Activated T-helper 2 cell treated with anti-CD3 and anti-CD28 coated beads, Interferon-gamma antibody, Interleukin-2, Interleukin-4, amounts not matched to agents 10 μg/mL and 5 μg/mL and 100 μg/mL, durations not matched to agents 14 hours and 24 hours and 36 hours (primary cell): ENCODE measurements at regions of chr2 and their contacts with region 1.

Region 1: DNA sequence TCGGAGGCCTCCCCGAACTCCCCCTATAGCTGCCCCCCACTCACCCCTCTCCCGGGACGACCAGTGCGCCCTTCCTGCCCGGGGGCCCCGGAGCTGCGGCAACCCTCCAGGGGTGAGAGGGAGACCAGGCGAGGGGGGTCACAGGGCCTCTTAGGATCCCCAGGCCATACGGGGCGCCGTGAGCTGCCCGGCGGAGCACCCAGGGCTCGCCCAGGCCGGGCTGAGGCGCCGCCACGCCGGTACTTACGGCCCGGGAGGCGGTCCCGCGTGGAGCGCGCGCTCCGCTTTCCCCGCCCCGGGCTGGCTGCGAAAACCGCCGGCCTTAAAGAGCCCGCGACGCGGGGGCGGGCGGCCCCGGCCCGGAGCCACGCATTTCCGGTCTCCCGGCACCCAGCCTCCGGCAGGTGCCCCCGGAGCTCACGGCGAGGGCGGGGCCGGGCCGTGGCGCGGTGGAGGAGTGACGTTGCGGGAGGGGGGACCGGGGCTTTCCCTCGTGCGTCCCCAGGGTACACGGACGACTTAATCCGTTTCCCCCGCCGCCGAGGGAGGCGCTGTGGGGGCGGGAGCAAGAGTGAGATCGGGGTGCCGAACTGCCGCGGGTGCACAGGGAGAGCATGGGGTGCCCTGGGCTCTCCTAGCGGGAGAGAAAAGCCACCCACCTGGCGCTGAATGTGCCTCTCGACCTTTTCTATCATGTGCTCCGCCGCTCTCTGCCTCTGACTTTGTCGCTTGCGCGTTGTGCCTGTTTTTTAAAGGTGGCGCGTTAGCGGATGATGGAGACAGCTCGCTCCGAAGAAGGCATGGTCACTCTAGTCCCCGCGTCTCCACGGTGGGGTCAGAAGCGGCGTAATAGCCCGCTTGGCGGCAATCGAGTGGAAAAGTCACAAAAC is at the start of gene METTL21A:
- DNase-seq: peak; percentile 93
- H3K4me3 Mint-ChIP-seq: peak within 1 kb of the TSS; percentile 92
- H3K27ac Mint-ChIP-seq: peak within 1 kb of the TSS; percentile 98
- H3K4me1 Mint-ChIP-seq: peaks cover 37% of the 10 kb centered on the region
- H3K27me3 Mint-ChIP-seq: no peaks in the 10 kb centered on the region
- total RNA-seq, gene METTL21A: 32.1 and 35.1 TPM in 2 replicates

Region 2: DNA sequence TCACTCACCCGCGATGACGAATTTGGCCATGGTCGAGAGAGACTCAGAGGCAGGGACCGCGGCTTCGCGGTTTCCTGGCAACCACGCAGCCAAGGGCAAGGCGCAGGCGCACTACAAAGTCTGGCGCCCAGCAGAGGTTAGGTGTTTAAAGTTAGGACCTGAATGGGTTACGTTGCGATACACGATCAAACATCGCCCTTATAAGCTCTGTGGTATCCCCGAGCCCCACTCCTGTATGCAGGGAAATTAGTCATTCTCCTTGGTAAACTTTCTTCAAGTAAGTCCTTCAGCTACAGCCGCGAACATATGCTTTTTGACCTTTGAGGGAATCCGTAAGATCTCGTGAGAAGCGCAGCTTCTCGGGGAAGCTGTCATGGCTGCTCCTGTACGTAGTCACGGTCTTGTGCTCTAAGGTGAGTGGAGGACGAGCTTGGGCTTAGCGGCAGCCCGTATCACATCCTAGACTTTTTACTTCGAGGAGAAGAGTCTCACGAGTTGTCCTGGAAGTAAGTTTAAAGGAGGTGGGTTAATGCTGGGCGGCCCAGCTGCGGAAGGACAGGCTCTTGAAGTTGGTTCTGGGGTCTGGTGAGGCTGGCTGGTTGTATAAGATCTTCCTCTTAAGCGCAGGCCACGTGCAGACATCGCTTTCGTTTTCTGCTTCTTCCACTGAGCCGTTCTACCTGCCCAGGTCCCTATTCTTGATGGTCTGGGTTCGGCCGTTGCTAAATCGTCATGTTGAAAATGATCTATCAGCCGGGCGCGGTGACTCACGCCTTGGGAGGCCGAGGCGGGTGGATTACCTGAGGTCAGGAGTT is 859.8 kb before region 1 on chr2 and contains the starts of genes FASTKD2 and MDH1B:
- intact Hi-C with region 1: loop called (anchors 1 kb)
- DNase-seq: peak; percentile 80
- H3K4me3 Mint-ChIP-seq: peak within 1 kb of the TSS; percentile 94
- H3K27ac Mint-ChIP-seq: peak within 1 kb of the TSS; percentile 97
- H3K4me1 Mint-ChIP-seq: peaks cover 29% of the 10 kb centered on the region
- H3K27me3 Mint-ChIP-seq: peaks cover 3% of the 10 kb centered on the region
- total RNA-seq, gene FASTKD2: 34.5 and 34.7 TPM in 2 replicates
- total RNA-seq, gene MDH1B: 0.25 and 0.55 TPM in 2 replicates

Region 3: DNA sequence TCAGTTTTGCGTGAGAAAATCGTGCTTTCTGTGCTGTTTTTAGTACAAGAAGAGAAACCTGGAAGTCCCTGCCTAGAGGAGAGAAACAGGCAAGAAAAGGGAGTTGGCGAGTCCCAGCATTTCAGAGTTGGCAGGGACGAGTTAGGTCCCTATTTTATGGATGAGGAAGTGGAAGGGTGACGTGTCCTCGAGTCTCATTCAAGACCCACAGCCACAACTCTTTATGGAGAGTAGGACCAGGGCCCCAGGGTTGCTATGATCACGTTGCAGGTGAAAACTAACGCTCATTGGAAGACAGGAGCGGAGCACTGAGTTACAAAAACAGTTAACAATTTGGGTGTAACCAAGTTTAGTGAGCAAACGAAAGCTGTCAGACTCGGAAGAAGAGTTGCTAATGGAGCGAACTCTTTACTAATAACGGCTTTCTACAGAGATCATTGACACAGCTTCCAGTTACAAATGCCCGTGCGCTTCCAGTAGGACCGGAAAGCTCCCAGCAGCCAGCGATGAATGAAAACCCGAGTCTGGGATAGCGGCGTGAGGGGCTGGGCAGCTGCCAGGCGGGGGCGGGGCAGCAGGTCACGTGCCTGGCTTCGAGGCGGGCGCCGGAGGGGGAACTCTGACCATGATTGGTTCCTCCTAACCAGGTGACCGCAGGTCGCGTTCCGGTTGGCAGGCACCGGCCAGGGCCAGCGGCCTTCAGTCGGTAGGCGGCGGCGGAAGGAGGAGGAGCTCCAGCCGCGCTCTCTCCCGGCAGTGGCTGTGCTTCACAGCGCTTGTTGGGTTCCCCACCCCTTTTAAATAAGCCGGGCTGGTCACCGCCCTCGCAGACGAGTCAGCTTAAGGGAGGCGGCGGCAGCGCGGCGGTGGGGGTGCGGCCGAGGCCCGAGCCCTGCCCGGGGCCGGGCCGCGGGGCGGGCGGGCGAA is 85.8 kb after region 1 on chr2 and contains the start of gene CCNYL1:
- intact Hi-C with region 1: loop called (anchors 1 kb)
- DNase-seq: peak; percentile 99
- H3K4me3 Mint-ChIP-seq: peak within 1 kb of the TSS; percentile 96
- H3K27ac Mint-ChIP-seq: peak within 1 kb of the TSS; percentile 87
- H3K4me1 Mint-ChIP-seq: peaks cover 21% of the 10 kb centered on the region
- H3K27me3 Mint-ChIP-seq: no peaks in the 10 kb centered on the region
- total RNA-seq, gene CCNYL1: 6.7 and 8.2 TPM in 2 replicates

Region 4: DNA sequence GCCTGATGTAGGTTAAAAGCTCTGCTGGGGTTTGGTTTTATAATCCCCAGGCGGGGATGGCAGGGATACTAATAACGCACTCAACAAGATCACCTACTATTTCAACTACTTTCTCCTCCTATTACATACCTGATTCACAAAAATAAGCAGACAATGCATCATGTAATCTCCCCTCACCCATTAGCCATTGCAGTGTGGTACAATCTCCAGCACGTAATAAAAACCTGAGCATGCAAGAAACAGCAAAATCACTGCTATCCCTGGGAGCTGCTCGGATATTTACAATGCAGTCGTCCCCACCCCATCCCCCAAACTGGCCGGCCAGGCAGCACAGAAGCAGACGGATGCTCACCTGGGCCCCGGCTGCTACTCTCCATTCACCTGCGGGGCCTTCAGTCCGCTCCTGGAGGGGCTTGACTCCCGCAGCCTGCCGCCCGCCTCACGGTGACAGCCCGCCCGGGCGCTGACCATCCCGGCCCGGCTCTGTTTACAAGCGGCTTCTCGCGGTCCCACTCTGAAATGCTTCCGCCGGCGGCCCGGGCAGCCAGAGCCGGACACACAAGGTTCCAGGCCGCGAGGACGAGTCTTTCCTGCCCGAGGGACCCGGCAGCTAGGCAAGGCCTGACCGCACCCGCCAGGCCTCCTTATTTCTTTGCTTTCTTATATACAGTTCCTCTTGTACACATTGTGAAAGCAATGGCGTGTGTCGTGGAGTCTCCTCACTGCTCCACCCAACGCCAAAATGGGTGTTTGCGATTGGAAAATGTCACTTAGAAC is 400.0 kb after region 1 on chr2 and contains the start of gene PLEKHM3:
- intact Hi-C with region 1: loop called (anchors 5 kb)
- DNase-seq: peak; percentile 76
- H3K4me3 Mint-ChIP-seq: peak within 1 kb of the TSS; percentile 100
- H3K27ac Mint-ChIP-seq: peak within 1 kb of the TSS; percentile 84
- H3K4me1 Mint-ChIP-seq: peaks cover 19% of the 10 kb centered on the region
- H3K27me3 Mint-ChIP-seq: peaks cover 3% of the 10 kb centered on the region
- total RNA-seq, gene PLEKHM3: 7.1 and 8.4 TPM in 2 replicates

Region 5: DNA sequence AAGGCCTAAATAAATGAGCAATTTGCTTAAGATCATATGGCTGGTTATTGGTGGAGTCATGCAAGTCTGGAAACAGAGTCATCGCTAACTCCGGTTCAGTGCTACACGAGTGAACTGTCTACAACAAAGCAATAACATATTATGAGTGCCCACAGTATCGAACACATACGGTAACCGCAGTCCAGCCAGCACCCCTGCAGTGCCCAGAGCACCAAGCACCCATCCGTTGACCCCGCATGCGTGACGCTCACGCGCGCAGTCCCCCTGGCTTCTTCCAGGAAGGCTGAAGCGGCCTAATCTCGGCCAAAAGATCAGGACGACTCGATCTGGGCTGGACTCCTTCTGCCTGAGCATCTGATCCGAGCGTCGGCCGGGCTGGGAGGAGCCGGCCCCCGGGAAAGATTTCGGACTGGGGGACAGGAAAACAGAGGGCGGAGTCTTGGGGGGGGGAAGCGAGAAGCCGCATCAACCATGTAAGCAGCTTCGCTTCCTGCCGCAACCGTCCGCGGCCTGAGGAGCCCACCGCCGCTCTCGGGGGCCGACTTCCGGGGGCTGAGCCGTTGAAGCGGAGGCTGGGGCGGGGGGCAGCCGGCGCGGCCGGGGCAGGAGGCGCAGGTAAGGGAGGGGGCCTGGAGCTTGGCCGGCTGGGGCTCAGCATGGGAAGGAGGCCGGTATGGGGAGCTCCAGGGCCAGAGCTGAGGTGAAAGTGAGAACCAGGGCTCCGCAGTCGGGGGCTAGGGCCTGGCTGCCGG is 640.7 kb after region 1 on chr2 and contains the start of gene PIKFYVE:
- intact Hi-C with region 1: loop called (anchors 1 kb)
- DNase-seq: peak; percentile 89
- H3K4me3 Mint-ChIP-seq: peak within 1 kb of the TSS; percentile 92
- H3K27ac Mint-ChIP-seq: peak within 1 kb of the TSS; percentile 95
- H3K4me1 Mint-ChIP-seq: peaks cover 45% of the 10 kb centered on the region
- H3K27me3 Mint-ChIP-seq: no peaks in the 10 kb centered on the region
- total RNA-seq, gene PIKFYVE: 30.3 and 34.1 TPM in 2 replicates